ENCODE measurements at regions of chr14 and their contacts with region 1.

Region 1: DNA sequence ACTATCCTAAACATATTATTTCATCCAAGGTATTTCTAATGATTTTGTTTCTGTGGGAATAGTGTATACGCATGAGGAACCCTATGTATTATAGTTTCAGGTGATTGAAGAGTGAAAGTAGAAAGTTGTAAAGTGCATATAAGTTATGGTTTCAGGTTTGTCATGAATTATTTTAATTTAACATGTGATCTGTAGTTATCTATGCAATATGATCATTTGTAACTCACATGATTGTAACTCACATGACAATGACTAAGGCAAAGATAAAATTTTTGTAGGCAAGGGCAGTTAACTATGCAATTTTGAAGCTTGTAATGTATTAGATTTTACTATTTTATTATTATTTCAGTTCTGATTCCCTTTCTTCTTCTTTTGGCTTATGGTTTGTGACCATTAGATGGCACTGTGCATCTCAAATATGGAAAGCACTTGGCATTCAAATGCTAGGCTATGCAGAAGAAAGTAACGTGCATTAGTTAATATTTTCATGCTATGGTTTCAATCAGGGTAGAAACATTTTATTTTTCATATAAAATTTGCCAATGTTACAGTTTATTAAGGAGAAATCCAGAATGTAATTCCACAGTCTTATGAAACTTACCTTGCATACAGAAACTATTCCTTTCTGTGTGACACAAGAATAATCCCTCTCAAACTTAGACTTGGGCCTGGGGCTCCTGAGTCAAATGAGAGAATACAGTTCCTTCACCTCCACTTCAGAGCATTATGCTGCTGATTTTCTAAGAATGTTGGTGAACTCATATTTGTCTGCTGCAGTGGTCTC is 15.8 kb upstream of the TMEM30B start:
- DNase-seq: peak; percentile 41 to 67 (median 59)
- H3K4me3 ChIP-seq: no peak overlapping the region
- H3K4me3 Mint-ChIP-seq: no peak overlapping the region
- H3K27ac ChIP-seq: no peak overlapping the region
- H3K27ac Mint-ChIP-seq: peak overlapping the region in 2 of 7 donors; percentile 43 to 79
- H3K4me1 ChIP-seq: peaks cover 21% of the 10 kb centered on the region
- H3K4me1 Mint-ChIP-seq: peaks cover 27 to 47% (median 38%) of the 10 kb centered on the region in 4 donors
- H3K27me3 ChIP-seq: no peaks in the 10 kb centered on the region
- H3K27me3 Mint-ChIP-seq: no peaks in the 10 kb centered on the region

Region 2: GRCh38 chr14:61537563-61538463 is 240.9 kb after region 1 on chr14:
- CTCF ChIA-PET with region 1: no interaction called
- POLR2A ChIA-PET with region 1: no interaction called
- intact Hi-C with region 1: loop called (anchors 10 kb)
- DNase-seq: no peak
- H3K4me3 ChIP-seq: no peak overlapping the region
- H3K4me3 Mint-ChIP-seq: no peak overlapping the region
- H3K27ac ChIP-seq: no peak overlapping the region
- H3K27ac Mint-ChIP-seq: peak overlapping the region in 6 of 7 donors; percentile 52 to 90 (median 76)
- H3K4me1 ChIP-seq: no peaks in the 10 kb centered on the region
- H3K4me1 Mint-ChIP-seq: peaks cover 2 to 34% (median 19%) of the 10 kb centered on the region in 4 donors
- H3K27me3 ChIP-seq: no peaks in the 10 kb centered on the region
- H3K27me3 Mint-ChIP-seq: no peaks in the 10 kb centered on the region

Region 3: GRCh38 chr14:61568572-61569131 is 271.7 kb after region 1 on chr14:
- CTCF ChIA-PET with region 1: no interaction called
- POLR2A ChIA-PET with region 1: no interaction called
- intact Hi-C with region 1: loop called (anchors 1 kb)
- DNase-seq: peak; percentile 45 to 62 (median 62)
- H3K4me3 ChIP-seq: no peak overlapping the region
- H3K4me3 Mint-ChIP-seq: peak overlapping the region; percentile 59 to 86 (median 74)
- H3K27ac ChIP-seq: no peak overlapping the region
- H3K27ac Mint-ChIP-seq: peak overlapping the region in 6 of 7 donors; percentile 2 to 83 (median 54)
- H3K4me1 ChIP-seq: peaks cover 30% of the 10 kb centered on the region
- H3K4me1 Mint-ChIP-seq: peaks cover 25 to 54% (median 36%) of the 10 kb centered on the region in 4 donors
- H3K27me3 ChIP-seq: no peaks in the 10 kb centered on the region
- H3K27me3 Mint-ChIP-seq: no peaks in the 10 kb centered on the region

Region 4: DNA sequence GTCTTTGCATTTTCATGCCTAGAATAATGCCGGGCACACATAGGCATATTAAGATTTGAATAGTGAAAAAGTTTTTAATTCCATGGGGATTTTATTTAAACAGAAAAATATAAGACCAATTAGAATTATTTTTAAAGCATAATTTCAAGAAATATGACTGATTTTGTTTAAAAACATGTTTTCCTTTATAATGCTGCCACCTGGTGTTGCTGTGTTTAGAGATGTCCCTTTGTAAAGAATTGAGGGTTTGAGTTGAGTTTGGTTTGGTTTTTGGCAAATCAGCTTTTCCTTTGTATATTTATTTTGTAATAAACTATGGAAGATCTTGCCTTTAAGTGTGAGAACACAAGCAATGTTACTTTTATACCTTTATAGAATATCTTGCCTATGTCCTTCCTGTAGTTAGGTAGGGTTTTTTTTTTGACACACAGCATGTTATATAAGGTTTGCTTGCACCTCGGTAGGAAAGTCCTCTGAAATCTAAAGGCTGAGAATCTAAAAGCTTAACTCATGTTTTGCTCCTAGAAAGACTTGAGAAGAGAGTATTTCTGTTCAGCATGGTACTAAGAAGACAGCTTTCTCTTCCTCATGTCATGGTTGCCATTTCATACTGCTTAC is 434.0 kb after region 1 on chr14:
- CTCF ChIA-PET with region 1: interaction called, 5 read pairs
- POLR2A ChIA-PET with region 1: no interaction called
- intact Hi-C with region 1: loop called (anchors 1 kb)
- DNase-seq: peak in 4 of 5 donors; percentile 30 to 34 (median 30)
- H3K4me3 ChIP-seq: no peak overlapping the region
- H3K4me3 Mint-ChIP-seq: no peak overlapping the region
- H3K27ac ChIP-seq: no peak overlapping the region
- H3K27ac Mint-ChIP-seq: peak overlapping the region in 6 of 7 donors; percentile 2 to 83 (median 52)
- H3K4me1 ChIP-seq: peaks cover 5% of the 10 kb centered on the region
- H3K4me1 Mint-ChIP-seq: peaks cover 10 to 16% (median 12%) of the 10 kb centered on the region in 4 donors
- H3K27me3 ChIP-seq: no peaks in the 10 kb centered on the region
- H3K27me3 Mint-ChIP-seq: no peaks in the 10 kb centered on the region